Posterior cingulate gyrus (tissue), 11 donors: ENCODE measurements at regions of chr5 and their contacts with region 1.

Region 1: GRCh38 chr5:116492016-116492623 is 82.5 kb downstream of the SEMA6A start:
- DNase-seq: no peak

Region 2: GRCh38 chr5:116411101-116411571 is 81.0 kb before region 1 on chr5:
- intact Hi-C with region 1: loop called (anchors 10 kb)
- DNase-seq: peak in 6 of 10 donors; percentile 21 to 87 (median 46)

Region 3: GRCh38 chr5:116428966-116429365 is 63.2 kb before region 1 on chr5:
- intact Hi-C with region 1: no loop called
- DNase-seq: peak in 3 of 10 donors; percentile 37 to 80 (median 37)

Region 4: DNA sequence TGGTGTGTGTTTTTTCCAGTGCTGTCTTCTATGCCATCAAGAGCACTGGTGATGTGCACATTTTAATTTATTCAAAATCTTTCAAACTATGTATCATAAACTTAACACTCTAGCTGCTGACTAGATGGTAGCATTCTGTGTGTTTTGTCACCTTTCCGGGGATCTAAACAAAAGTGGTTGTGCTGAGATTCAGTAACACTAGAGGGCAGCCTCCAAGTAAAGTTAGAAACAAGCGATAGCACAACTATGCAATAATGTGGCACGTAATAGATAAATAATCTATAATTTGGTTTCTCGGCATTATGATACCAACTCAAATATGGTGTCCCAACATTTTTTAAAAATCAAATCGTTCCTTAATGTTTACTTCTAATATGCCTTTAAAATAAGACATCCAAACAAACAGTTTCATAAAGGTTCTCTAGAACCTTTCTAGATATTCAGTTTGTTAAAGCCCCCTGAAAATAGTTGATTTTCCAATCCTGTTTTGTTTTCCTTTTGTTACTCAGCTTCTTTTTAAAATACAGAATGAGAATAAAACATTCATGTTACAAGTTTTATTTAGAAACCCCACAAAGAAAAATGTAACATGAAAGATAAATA is 65.7 kb after region 1 on chr5:
- intact Hi-C with region 1: loop called (anchors 10 kb)
- DNase-seq: no peak